CD8-positive, alpha-beta memory T cell (primary cell): ENCODE measurements at regions of chr17 and their contacts with region 1.

Region 1: GRCh38 chr17:49390548-49391324 is 23.9 kb downstream of the PHB1 start:
- DNase-seq: no peak
- H3K4me3 ChIP-seq: peak overlapping the region; percentile 28
- H3K4me3 Mint-ChIP-seq: peak overlapping the region in 6 of 7 donors; percentile 77 to 91 (median 80)
- H3K27ac ChIP-seq: no peak overlapping the region
- H3K27ac Mint-ChIP-seq: peak overlapping the region; percentile 81 to 99 (median 96)
- H3K4me1 ChIP-seq: peaks cover 53% of the 10 kb centered on the region
- H3K4me1 Mint-ChIP-seq: peaks cover 61 to 73% (median 73%) of the 10 kb centered on the region in 3 donors
- H3K27me3 ChIP-seq: no peaks in the 10 kb centered on the region
- H3K27me3 Mint-ChIP-seq: no peaks in the 10 kb centered on the region

Region 2: DNA sequence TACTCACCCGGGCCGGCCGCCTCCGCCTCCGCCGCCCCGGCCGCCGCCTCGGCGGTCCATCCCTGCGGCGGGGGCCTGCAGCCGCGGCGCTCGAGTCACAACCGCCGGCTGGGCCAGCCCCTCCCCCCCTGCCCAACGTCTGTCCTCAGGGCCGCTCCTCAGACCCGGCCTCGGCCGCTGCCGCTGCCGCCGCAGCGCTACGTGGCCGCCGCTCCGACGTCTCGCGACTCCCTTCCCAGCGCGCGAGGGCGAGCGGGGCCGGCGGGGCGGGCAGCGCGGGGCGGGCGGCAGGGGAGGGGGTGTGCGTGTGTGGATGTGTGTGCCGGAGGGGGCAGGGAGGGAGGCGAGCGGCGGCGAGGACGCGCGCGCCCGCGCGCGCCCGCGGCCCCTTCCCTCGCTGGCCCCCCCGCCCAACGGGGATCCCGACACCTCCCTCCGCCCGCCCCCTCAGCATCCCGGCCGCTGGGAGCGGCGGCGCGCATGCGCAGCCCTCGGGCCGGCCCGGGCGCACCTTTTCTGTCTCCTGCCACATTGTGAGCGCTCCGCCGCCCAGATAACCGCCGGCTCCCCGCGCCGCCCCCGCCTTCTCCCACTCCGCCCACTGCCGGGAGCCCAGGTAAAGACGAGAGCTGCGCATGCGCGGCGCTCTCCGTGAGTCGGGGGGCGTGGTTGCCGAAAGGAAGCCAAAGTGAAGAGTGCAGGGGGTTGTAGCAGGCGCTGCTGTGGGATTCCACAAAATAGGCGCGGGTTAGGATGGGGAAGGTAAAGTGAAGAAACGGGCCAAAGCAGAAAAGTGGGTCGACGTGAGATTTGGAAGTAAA is 28.6 kb before region 1 on chr17 and contains the start of gene ZNF652:
- CTCF ChIA-PET with region 1: interaction called, 22 read pairs
- POLR2A ChIA-PET with region 1: interaction called, 10 read pairs
- DNase-seq: peak; percentile 88 to 98 (median 96)
- H3K4me3 ChIP-seq: peak within 1 kb of the TSS; percentile 70
- H3K4me3 Mint-ChIP-seq: peak within 1 kb of the TSS; percentile 92 to 99 (median 95)
- H3K27ac ChIP-seq: peak within 1 kb of the TSS; percentile 56
- H3K27ac Mint-ChIP-seq: peak within 1 kb of the TSS; percentile 94 to 100 (median 98)
- H3K4me1 ChIP-seq: peaks cover 55% of the 10 kb centered on the region
- H3K4me1 Mint-ChIP-seq: peaks cover 61 to 69% (median 65%) of the 10 kb centered on the region in 3 donors
- H3K27me3 ChIP-seq: no peaks in the 10 kb centered on the region
- H3K27me3 Mint-ChIP-seq: peaks cover 0 to 2% of the 10 kb centered on the region in 2 donors
- total RNA-seq, gene ZNF652: 11.5 to 11.9 TPM

Region 3: GRCh38 chr17:49370971-49371834 is 19.5 kb before region 1 on chr17:
- CTCF ChIA-PET with region 1: interaction called, 26 read pairs
- POLR2A ChIA-PET with region 1: no interaction called
- DNase-seq: no peak
- H3K4me3 ChIP-seq: no peak overlapping the region
- H3K4me3 Mint-ChIP-seq: no peak overlapping the region
- H3K27ac ChIP-seq: no peak overlapping the region
- H3K27ac Mint-ChIP-seq: peak overlapping the region in 1 of 8 donors; percentile 26
- H3K4me1 ChIP-seq: no peaks in the 10 kb centered on the region
- H3K4me1 Mint-ChIP-seq: peaks cover 13 to 20% (median 14%) of the 10 kb centered on the region in 3 donors
- H3K27me3 ChIP-seq: no peaks in the 10 kb centered on the region
- H3K27me3 Mint-ChIP-seq: no peaks in the 10 kb centered on the region

Region 4: GRCh38 chr17:49438436-49439278 is 47.9 kb after region 1 on chr17:
- CTCF ChIA-PET with region 1: no interaction called
- POLR2A ChIA-PET with region 1: no interaction called
- DNase-seq: no peak
- H3K4me3 ChIP-seq: no peak overlapping the region
- H3K4me3 Mint-ChIP-seq: no peak overlapping the region
- H3K27ac ChIP-seq: no peak overlapping the region
- H3K27ac Mint-ChIP-seq: no peak overlapping the region
- H3K4me1 ChIP-seq: no peaks in the 10 kb centered on the region
- H3K4me1 Mint-ChIP-seq: no peaks in the 10 kb centered on the region
- H3K27me3 ChIP-seq: peaks cover 7% of the 10 kb centered on the region
- H3K27me3 Mint-ChIP-seq: peaks cover 50 to 76% of the 10 kb centered on the region in 2 donors